Activated CD4-positive, alpha-beta memory T cell treated with anti-CD3 and anti-CD28 coated beads for 36 hours (primary cell): ENCODE measurements at regions of chr19 and their contacts with region 1.

Region 1: DNA sequence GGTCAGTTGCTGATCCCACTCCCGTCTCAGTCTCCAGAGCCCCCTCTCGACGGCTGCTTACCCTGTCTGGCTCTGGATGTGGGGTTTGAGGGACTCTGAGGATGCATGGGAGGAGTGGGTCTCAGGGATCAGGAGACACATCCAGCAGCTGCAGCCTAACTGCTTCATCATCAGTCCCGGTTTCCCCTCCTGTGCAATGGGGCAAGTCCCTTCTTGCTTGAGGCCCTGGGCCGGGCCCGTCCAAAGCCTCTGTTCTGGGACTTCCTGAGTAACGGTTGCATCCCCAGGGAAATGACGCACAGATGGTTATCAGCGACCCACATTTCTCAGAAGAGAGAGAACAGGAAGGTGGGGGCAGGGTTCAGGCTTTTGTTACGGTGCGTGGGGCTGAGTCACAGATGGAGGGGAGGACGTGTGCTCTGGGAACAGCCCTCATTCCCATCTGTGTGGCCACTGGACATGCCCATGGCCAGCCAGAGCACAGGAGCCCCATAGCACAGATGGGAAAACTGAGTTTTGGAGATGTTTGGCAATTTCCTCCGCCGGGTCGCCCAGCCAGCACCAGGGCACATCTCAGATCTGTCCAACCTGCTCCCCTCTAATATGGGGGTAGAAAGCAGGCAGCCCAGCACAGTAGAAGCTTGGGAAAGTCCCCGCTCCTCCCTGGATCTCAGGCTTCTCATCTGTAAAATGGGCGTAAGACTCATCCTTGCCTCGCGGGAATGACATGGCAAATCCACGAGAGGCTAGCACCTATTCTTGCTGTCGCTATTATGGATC is 19.3 kb downstream of the GNA15 start:
- DNase-seq: peak; percentile 95
- H3K4me3 Mint-ChIP-seq: no peak overlapping the region
- H3K27ac Mint-ChIP-seq: no peak overlapping the region
- H3K4me1 Mint-ChIP-seq: peaks cover 4% of the 10 kb centered on the region
- H3K27me3 Mint-ChIP-seq: no peaks in the 10 kb centered on the region

Region 2: GRCh38 chr19:3132971-3133792 is 22.0 kb before region 1 on chr19:
- CTCF ChIA-PET with region 1: interaction called, 37 read pairs
- POLR2A ChIA-PET with region 1: no interaction called
- intact Hi-C with region 1: loop called (anchors 1 kb)
- DNase-seq: peak; percentile 95
- H3K4me3 Mint-ChIP-seq: peak overlapping the region; percentile 42
- H3K27ac Mint-ChIP-seq: peak overlapping the region; percentile 85
- H3K4me1 Mint-ChIP-seq: peaks cover 34% of the 10 kb centered on the region
- H3K27me3 Mint-ChIP-seq: no peaks in the 10 kb centered on the region

Region 3: DNA sequence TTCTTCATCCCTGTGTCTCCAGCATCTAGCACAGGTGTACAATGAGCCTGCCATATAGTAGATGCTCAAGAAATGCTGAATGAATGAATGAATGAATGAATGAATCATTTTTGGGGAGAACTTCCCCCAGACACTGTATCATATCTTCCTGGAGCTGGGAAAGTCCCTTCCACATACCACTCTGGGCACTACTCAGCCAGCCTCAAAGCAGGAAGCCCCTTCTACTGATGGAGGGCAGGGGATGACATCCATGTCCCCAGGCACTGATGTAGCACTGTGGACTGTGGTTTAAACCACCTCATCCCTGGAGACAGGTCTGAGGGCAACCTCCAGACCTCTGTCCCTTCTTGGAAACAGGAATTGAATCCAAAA is 14.5 kb before region 1 on chr19:
- CTCF ChIA-PET with region 1: interaction called, 3 read pairs
- POLR2A ChIA-PET with region 1: no interaction called
- intact Hi-C with region 1: loop called (anchors 2 kb)
- DNase-seq: peak; percentile 38
- H3K4me3 Mint-ChIP-seq: peak overlapping the region; percentile 27
- H3K27ac Mint-ChIP-seq: peak overlapping the region; percentile 57
- H3K4me1 Mint-ChIP-seq: peaks cover 36% of the 10 kb centered on the region
- H3K27me3 Mint-ChIP-seq: no peaks in the 10 kb centered on the region

Region 4: DNA sequence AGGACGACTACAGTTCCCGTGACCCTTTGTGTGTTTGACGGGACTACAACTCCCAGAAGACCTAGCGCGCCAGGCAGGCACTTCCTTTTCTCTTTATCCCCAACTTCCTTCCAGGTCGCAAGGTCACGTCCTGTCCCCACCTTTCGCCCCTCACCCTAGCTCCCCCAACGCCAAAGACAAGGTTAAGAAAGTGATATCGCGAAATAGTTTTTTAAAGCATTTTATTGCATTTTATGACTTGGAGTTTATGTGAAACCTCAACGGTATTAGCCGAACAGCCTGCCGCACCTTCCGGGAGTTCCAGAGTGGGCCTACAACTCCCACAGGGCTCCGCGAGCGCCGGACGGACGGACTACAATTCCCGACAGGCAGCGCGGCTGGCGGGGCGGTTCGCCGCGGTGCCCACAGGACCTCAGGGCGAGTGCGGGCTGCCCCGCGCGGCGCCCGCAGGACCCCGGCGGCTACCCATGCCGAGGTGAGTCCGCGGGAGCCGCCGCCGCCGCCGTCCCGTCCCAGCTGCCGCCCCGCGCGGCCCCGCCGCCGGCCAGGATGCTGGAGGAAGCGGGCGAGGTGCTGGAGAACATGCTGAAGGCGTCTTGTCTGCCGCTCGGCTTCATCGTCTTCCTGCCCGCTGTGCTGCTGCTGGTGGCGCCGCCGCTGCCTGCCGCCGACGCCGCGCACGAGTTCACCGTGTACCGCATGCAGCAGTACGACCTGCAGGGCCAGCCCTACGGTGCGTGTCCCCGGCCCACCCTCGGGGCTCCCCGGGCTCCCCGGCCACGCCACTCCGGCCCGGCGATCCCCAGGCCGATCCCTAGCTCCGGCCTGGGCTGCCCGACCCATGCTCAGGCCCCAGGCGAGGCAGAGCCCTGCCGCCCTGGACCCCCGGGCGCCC is 30.6 kb after region 1 on chr19 and contains the start of gene NCLN:
- CTCF ChIA-PET with region 1: no interaction called
- POLR2A ChIA-PET with region 1: interaction called, 4 read pairs
- intact Hi-C with region 1: loop called (anchors 2 kb)
- DNase-seq: peak; percentile 94
- H3K4me3 Mint-ChIP-seq: peak within 1 kb of the TSS; percentile 97
- H3K27ac Mint-ChIP-seq: peak within 1 kb of the TSS; percentile 99
- H3K4me1 Mint-ChIP-seq: peaks cover 57% of the 10 kb centered on the region
- H3K27me3 Mint-ChIP-seq: no peaks in the 10 kb centered on the region
- total RNA-seq, gene NCLN: 47.0 to 50.9 TPM